ENCODE measurements at regions of chr12 and their contacts with region 1.

Region 1: GRCh38 chr12:104478396-104479122 is 21.8 kb downstream of the CHST11 start:
- DNase-seq: peak; percentile 90
- H3K4me3 ChIP-seq: peak overlapping the region; percentile 61
- H3K27ac ChIP-seq: peak overlapping the region; percentile 87
- H3K4me1 ChIP-seq: peaks cover 88% of the 10 kb centered on the region
- CTCF ChIP-seq: no peak

Region 2: DNA sequence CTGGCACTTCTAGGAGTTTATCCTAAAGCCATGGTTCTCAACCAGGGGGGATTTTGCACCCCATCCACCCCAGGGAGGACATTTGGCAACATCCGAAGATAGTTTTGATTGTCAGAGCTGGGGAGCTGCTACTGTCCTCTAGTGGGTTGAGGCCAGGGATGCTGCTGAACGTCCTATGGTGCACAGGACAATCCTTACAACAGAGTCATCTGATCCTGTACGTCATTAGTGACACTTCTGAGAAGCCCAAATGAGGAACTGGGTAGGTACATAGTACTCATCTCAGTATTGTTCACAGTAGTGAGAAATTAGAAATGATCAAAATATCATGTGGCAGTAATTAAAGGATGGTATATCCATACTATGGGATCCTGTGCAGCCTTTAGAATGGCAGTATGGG is 163.3 kb after region 1 on chr12:
- CTCF ChIA-PET with region 1: no interaction called
- POLR2A ChIA-PET with region 1: interaction called, 3 read pairs
- intact Hi-C with region 1: loop called (anchors 5 kb)
- DNase-seq: no peak
- H3K4me3 ChIP-seq: no peak overlapping the region
- H3K27ac ChIP-seq: no peak overlapping the region
- H3K4me1 ChIP-seq: peaks cover 18% of the 10 kb centered on the region
- CTCF ChIP-seq: no peak

Measured in OCI-LY7 (cell line).